Naive thymus-derived CD4-positive, alpha-beta T cell (primary cell): ENCODE measurements at regions of chr11 and their contacts with region 1.

Region 1: GRCh38 chr11:71928737-71929452 is at the start of gene RNF121:
- DNase-seq: peak; percentile 91 to 99 (median 96)
- ATAC-seq: peak; percentile 97
- H3K4me3 ChIP-seq: peak within 1 kb of the TSS; percentile 97
- H3K4me3 Mint-ChIP-seq: peak within 1 kb of the TSS; percentile 92 to 100 (median 98)
- H3K27ac ChIP-seq: peak within 1 kb of the TSS; percentile 88
- H3K27ac Mint-ChIP-seq: peak within 1 kb of the TSS; percentile 94 to 100 (median 98)
- H3K4me1 ChIP-seq: peaks cover 17 to 22% of the 10 kb centered on the region in 2 donors
- H3K4me1 Mint-ChIP-seq: peaks cover 26 to 70% (median 60%) of the 10 kb centered on the region in 7 donors
- H3K27me3 ChIP-seq: no peaks in the 10 kb centered on the region
- H3K27me3 Mint-ChIP-seq: no peaks in the 10 kb centered on the region
- total RNA-seq, gene RNF121: 18.2 to 37.2 (median 29.2) TPM

Region 2: DNA sequence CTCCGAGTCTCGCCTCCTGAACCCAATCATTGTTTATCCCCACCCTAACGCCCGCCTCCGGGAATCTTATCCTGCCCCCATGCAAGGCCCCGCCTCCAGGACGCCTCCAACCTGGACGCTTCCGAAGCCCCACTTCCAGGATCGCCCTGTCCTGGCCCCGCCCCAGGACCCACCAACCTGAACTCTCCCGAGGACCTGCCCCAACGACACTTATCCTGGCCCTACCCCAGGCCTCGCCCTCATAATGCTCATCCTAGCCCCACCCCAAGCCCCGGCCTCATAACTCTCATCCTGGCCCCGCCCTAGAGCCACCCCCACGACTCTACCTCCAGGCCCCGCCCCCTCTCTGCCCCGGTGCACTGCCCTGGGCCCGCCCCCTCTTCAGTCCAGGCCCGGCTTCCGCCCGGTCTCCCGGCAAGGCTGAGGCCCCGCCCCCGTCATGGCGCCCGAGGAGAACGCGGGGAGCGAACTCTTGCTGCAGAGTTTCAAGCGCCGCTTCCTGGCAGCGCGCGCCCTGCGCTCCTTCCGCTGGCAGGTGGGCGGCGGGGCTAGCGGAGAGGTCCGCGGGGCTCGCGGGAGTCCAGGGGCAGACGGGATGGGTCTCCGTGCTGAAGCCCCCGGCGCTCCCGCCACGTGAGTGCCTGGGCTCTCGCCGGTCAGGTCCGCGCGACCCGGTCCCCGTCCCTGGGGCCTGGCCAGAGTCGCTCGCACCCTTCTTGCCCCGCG is 141.6 kb before region 1 on chr11:
- CTCF ChIA-PET with region 1: no interaction called
- POLR2A ChIA-PET with region 1: no interaction called
- intact Hi-C with region 1: loop called (anchors 1 to 2 kb)
- DNase-seq: peak; percentile 86 to 96 (median 94)
- ATAC-seq: peak; percentile 98
- H3K4me3 ChIP-seq: peak overlapping the region; percentile 86
- H3K4me3 Mint-ChIP-seq: peak overlapping the region; percentile 95 to 100 (median 98)
- H3K27ac ChIP-seq: peak overlapping the region; percentile 93
- H3K27ac Mint-ChIP-seq: peak overlapping the region; percentile 88 to 99 (median 98)
- H3K4me1 ChIP-seq: no peaks in the 10 kb centered on the region
- H3K4me1 Mint-ChIP-seq: peaks cover 0 to 20% (median 12%) of the 10 kb centered on the region in 7 donors
- H3K27me3 ChIP-seq: no peaks in the 10 kb centered on the region
- H3K27me3 Mint-ChIP-seq: peaks cover 0 to 5% (median 0%) of the 10 kb centered on the region in 5 donors

Region 3: DNA sequence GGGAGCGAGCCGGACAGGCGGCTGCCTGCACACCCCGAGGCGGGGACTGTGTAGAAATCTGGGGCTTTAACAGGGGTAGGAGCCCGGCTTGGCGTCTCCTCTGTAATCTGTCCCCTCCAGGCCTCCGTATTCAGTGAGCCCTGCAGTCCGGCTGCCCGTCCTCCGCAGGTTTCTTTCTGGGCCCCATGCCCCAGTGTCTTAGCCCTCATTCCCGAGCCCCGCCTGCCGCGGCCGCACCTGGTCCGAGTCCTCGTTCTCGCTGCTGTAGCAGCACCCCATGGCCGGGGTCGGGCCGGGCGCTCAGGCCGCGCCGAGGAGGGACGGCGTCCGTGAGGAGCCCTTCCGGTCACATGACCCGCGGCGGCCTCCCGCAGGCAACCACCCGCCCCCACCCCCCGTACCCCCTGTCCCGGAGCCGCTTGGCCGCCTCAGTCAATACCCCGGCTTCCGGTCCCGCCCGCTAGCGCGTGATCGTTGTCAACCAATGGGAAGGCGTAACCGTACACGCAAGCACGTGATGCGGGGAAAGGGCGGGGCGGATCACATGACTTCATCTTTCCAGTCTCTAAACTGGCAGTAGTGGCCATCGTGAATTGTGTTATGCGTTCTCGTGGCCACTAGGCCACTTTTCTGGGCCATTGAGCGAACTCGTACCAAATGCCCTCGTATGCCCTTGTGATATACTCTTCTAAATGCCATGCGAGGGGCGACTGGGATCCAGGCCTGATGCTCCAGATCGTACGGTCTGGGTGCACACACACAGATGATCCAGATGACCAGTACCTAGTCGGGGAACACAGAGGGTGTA is 174.3 kb after region 1 on chr11 and contains the start of gene LAMTOR1:
- CTCF ChIA-PET with region 1: no interaction called
- POLR2A ChIA-PET with region 1: no interaction called
- intact Hi-C with region 1: loop called in 1 of 2 experiments (anchors 2 kb)
- DNase-seq: peak; percentile 87 to 98 (median 95)
- ATAC-seq: peak; percentile 98
- H3K4me3 ChIP-seq: peak within 1 kb of the TSS; percentile 54
- H3K4me3 Mint-ChIP-seq: peak within 1 kb of the TSS; percentile 66 to 97 (median 86)
- H3K27ac ChIP-seq: peak within 1 kb of the TSS; percentile 93
- H3K27ac Mint-ChIP-seq: peak within 1 kb of the TSS; percentile 83 to 98 (median 94)
- H3K4me1 ChIP-seq: peaks cover 20% of the 10 kb centered on the region in 2 donors
- H3K4me1 Mint-ChIP-seq: peaks cover 37 to 49% (median 44%) of the 10 kb centered on the region in 7 donors
- H3K27me3 ChIP-seq: no peaks in the 10 kb centered on the region
- H3K27me3 Mint-ChIP-seq: no peaks in the 10 kb centered on the region
- total RNA-seq, gene LAMTOR1: 41.8 to 83.0 (median 69.7) TPM

Region 4: DNA sequence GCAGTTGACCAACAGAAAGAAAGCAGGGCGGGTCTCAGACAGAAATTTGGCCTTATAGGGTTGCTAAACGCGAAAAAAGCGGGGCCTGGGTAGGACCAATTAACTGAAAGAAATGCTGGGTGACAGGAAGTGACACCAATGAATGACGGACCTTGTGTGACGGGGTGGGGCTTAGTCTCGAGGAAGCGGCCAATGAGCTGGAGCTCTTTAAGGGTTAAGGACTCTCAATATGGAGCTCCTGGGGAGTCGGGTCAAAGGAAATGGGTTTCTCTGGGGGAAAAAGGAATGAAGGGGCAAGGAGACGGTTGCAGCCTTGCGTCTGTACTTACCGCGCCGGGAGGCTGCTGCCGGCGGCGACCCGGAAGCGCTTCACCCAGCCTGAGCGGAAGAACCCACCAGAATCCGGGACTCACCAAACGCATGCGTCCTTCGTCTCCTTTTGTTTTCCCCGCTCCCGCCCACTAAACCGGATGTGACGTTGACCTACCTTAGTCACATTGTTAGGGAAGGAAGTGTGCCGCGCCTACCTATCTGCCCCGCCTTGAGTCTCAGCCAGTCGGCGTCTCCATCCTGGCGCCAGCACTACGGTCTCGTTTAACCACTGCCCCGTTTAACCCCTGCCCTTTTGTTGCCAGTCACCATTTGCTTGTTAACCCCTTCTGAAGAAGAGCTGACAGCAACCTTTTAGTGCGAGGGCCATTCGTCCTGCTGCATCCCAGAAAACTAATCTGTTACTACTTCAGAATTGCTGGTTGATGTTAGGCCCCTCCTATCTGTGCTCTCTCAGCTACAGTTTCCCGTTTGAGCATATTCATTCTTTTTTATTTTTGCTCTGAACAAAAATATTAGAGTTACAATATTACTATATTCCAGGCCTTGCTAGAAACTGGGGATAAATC is 183.7 kb after region 1 on chr11 and contains the start of gene ANAPC15:
- CTCF ChIA-PET with region 1: no interaction called
- POLR2A ChIA-PET with region 1: interaction called, 15 read pairs
- intact Hi-C with region 1: loop called (anchors 1 kb)
- DNase-seq: peak; percentile 83 to 100 (median 99)
- ATAC-seq: peak; percentile 91
- H3K4me3 ChIP-seq: peak within 1 kb of the TSS; percentile 85
- H3K4me3 Mint-ChIP-seq: peak within 1 kb of the TSS; percentile 73 to 100 (median 96)
- H3K27ac ChIP-seq: peak within 1 kb of the TSS; percentile 92
- H3K27ac Mint-ChIP-seq: peak within 1 kb of the TSS; percentile 97 to 100 (median 98)
- H3K4me1 ChIP-seq: peaks cover 12 to 14% of the 10 kb centered on the region in 2 donors
- H3K4me1 Mint-ChIP-seq: peaks cover 12 to 29% (median 25%) of the 10 kb centered on the region in 7 donors
- H3K27me3 ChIP-seq: no peaks in the 10 kb centered on the region
- H3K27me3 Mint-ChIP-seq: peaks cover 0 to 6% (median 0%) of the 10 kb centered on the region in 5 donors
- total RNA-seq, gene ANAPC15: 43.0 to 59.6 (median 44.1) TPM

Region 5: GRCh38 chr11:73876424-73877300 is 1947.8 kb after region 1 on chr11 and contains the starts of genes COA4 and PAAF1:
- CTCF ChIA-PET with region 1: no interaction called
- POLR2A ChIA-PET with region 1: no interaction called
- intact Hi-C with region 1: loop called in 1 of 2 experiments (anchors 2 kb)
- DNase-seq: peak; percentile 72 to 95 (median 94)
- ATAC-seq: peak; percentile 99
- H3K4me3 ChIP-seq: peak within 1 kb of the TSS; percentile 94
- H3K4me3 Mint-ChIP-seq: peak within 1 kb of the TSS; percentile 94 to 98 (median 96)
- H3K27ac ChIP-seq: peak within 1 kb of the TSS; percentile 88
- H3K27ac Mint-ChIP-seq: peak within 1 kb of the TSS; percentile 92 to 100 (median 97)
- H3K4me1 ChIP-seq: peaks cover 17 to 19% of the 10 kb centered on the region in 2 donors
- H3K4me1 Mint-ChIP-seq: peaks cover 20 to 55% (median 43%) of the 10 kb centered on the region in 7 donors
- H3K27me3 ChIP-seq: no peaks in the 10 kb centered on the region
- H3K27me3 Mint-ChIP-seq: no peaks in the 10 kb centered on the region
- total RNA-seq, gene COA4: 29.1 to 75.0 (median 58.2) TPM
- total RNA-seq, gene PAAF1: 12.4 to 22.7 (median 20.3) TPM